ENCODE measurements at regions of chr1 and their contacts with region 1.

Region 1: GRCh38 chr1:101153692-101154091 is 83.1 kb upstream of the S1PR1 start:
- DNase-seq: peak; percentile 37
- H3K4me3 Mint-ChIP-seq: no peak overlapping the region
- H3K27ac Mint-ChIP-seq: peak overlapping the region; percentile 25
- H3K4me1 Mint-ChIP-seq: peaks cover 44% of the 10 kb centered on the region
- H3K27me3 Mint-ChIP-seq: no peaks in the 10 kb centered on the region

Region 2: DNA sequence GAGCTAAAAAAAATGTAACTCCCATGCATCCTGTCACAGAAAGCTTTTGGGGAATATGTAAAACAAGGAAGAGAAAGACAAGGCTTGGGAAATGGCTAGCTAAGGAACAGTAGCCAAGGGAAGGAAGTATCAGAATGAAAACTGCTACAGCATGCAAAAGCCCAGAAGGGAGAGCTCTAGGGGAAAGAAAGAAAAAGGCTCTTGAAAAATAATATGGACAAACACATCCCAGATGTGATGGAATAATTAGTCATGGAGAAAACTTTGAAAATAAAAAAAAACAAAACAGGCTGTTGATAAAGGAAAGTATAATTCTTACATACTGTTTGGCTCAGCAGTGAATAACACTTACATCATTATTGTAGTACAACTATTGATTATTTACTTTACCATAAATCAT is 482.1 kb before region 1 on chr1:
- CTCF ChIA-PET with region 1: no interaction called
- intact Hi-C with region 1: no loop called
- DNase-seq: no peak
- H3K4me3 Mint-ChIP-seq: no peak overlapping the region
- H3K27ac Mint-ChIP-seq: no peak overlapping the region
- H3K4me1 Mint-ChIP-seq: no peaks in the 10 kb centered on the region
- H3K27me3 Mint-ChIP-seq: no peaks in the 10 kb centered on the region

Region 3: GRCh38 chr1:101167891-101168290 is 14.2 kb after region 1 on chr1:
- CTCF ChIA-PET with region 1: interaction called, 7 read pairs
- intact Hi-C with region 1: loop called (anchors 1 kb)
- DNase-seq: no peak
- H3K4me3 Mint-ChIP-seq: no peak overlapping the region
- H3K27ac Mint-ChIP-seq: peak overlapping the region; percentile 43
- H3K4me1 Mint-ChIP-seq: peaks cover 41% of the 10 kb centered on the region
- H3K27me3 Mint-ChIP-seq: no peaks in the 10 kb centered on the region

Measured in activated naive CD4-positive, alpha-beta T cell treated with anti-CD3 and anti-CD28 coated beads for 36 hours (primary cell).